Right cardiac atrium (tissue), 5 donors: ENCODE measurements at regions of chr18 and their contacts with region 1.

Region 1: GRCh38 chr18:61893971-61894750 is 1.4 kb upstream of the RNF152 start:
- DNase-seq: peak; percentile 84 to 94 (median 93)
- ATAC-seq: peak; percentile 94 to 95
- H3K4me3 ChIP-seq: peak overlapping the region; percentile 90
- H3K27ac ChIP-seq: peak overlapping the region; percentile 37
- H3K4me1 ChIP-seq: no peaks in the 10 kb centered on the region
- H3K27me3 ChIP-seq: no peaks in the 10 kb centered on the region

Region 2: DNA sequence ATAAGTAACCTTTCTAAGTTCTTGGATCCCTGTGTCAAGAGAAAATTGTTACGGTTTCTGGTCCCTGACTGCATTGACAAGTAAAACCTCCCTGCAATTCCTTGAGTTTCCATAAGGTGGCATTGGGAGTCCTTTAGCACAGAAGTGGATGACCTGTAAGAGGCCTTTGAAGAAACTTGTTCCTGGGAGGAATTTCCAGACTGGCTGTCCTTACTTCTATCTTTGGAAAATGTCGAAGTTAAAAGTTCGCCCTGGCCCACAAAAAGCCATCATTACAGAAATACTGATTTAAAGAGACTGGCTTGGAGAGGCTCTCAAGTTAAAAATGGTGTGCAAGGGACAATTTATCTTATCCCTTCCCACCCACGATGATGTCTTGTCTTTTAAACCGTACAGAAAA is 342.6 kb before region 1 on chr18:
- intact Hi-C with region 1: loop called in 3 of 4 experiments (anchors 10 kb)
- DNase-seq: no peak
- ATAC-seq: peak; percentile 74 to 76
- H3K4me3 ChIP-seq: no peak overlapping the region
- H3K27ac ChIP-seq: no peak overlapping the region
- H3K4me1 ChIP-seq: no peaks in the 10 kb centered on the region
- H3K27me3 ChIP-seq: no peaks in the 10 kb centered on the region

Region 3: GRCh38 chr18:61581578-61582201 is 312.5 kb before region 1 on chr18:
- intact Hi-C with region 1: loop called in 1 of 4 experiments (anchors 10 kb)
- DNase-seq: peak; percentile 69 to 92 (median 91)
- ATAC-seq: peak; percentile 92 to 93
- H3K4me3 ChIP-seq: peak overlapping the region; percentile 38
- H3K27ac ChIP-seq: peak overlapping the region; percentile 25
- H3K4me1 ChIP-seq: no peaks in the 10 kb centered on the region
- H3K27me3 ChIP-seq: no peaks in the 10 kb centered on the region

Region 4: GRCh38 chr18:61635901-61636528 is 258.1 kb before region 1 on chr18:
- intact Hi-C with region 1: loop called in 2 of 4 experiments (anchors 5 kb)
- DNase-seq: peak; percentile 21 to 74 (median 62)
- ATAC-seq: peak; percentile 76 to 85
- H3K4me3 ChIP-seq: no peak overlapping the region
- H3K27ac ChIP-seq: no peak overlapping the region
- H3K4me1 ChIP-seq: no peaks in the 10 kb centered on the region
- H3K27me3 ChIP-seq: no peaks in the 10 kb centered on the region

Region 5: GRCh38 chr18:61743775-61744531 is 150.2 kb before region 1 on chr18:
- intact Hi-C with region 1: loop called in 1 of 4 experiments (anchors 5 kb)
- DNase-seq: peak; percentile 62 to 76 (median 75)
- ATAC-seq: peak; percentile 79 to 81
- H3K4me3 ChIP-seq: no peak overlapping the region
- H3K27ac ChIP-seq: peak overlapping the region; percentile 14
- H3K4me1 ChIP-seq: peaks cover 10% of the 10 kb centered on the region
- H3K27me3 ChIP-seq: no peaks in the 10 kb centered on the region

Region 6: DNA sequence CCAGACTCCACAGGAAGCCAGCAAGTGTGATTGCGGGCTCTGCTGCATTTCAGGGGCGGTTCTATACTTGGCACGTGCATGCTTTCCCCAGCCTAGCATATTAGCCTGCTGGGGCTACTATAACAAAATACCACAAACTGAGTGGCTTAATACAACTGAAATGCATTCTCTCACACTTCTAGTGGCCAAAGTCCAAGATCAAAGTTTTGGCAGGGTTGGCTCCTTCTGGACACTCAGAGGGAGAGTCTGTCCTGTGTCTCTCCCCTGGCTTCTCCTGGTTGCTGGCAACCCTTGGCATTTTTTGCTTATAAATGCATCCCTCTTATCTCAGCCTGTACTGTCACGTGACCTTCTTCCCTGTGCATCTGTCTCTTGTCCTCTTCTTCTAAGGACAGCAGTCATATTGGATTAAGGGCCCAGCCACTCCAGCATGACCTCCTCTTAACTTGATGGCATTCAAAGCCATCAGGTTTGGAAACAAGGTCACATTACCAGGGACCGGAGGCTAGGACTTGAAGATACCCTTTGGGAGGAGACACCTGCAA is 140.1 kb before region 1 on chr18:
- intact Hi-C with region 1: loop called in 1 of 4 experiments (anchors 10 kb)
- DNase-seq: no peak
- ATAC-seq: no peak
- H3K4me3 ChIP-seq: no peak overlapping the region
- H3K27ac ChIP-seq: no peak overlapping the region
- H3K4me1 ChIP-seq: no peaks in the 10 kb centered on the region
- H3K27me3 ChIP-seq: no peaks in the 10 kb centered on the region

Region 7: GRCh38 chr18:61797696-61798590 is 96.2 kb before region 1 on chr18:
- intact Hi-C with region 1: no loop called
- DNase-seq: no peak
- ATAC-seq: no peak
- H3K4me3 ChIP-seq: no peak overlapping the region
- H3K27ac ChIP-seq: no peak overlapping the region
- H3K4me1 ChIP-seq: no peaks in the 10 kb centered on the region
- H3K27me3 ChIP-seq: no peaks in the 10 kb centered on the region

Region 8: GRCh38 chr18:62131301-62131909 is 237.2 kb after region 1 on chr18:
- intact Hi-C with region 1: loop called in 1 of 4 experiments (anchors 10 kb)
- DNase-seq: peak in 2 of 3 donors; percentile 39 to 53
- ATAC-seq: peak in 1 of 2 donors; percentile 64
- H3K4me3 ChIP-seq: no peak overlapping the region
- H3K27ac ChIP-seq: no peak overlapping the region
- H3K4me1 ChIP-seq: no peaks in the 10 kb centered on the region
- H3K27me3 ChIP-seq: no peaks in the 10 kb centered on the region